PC-9 (cell line): ENCODE measurements at regions of chr20 and their contacts with region 1.

Region 1: DNA sequence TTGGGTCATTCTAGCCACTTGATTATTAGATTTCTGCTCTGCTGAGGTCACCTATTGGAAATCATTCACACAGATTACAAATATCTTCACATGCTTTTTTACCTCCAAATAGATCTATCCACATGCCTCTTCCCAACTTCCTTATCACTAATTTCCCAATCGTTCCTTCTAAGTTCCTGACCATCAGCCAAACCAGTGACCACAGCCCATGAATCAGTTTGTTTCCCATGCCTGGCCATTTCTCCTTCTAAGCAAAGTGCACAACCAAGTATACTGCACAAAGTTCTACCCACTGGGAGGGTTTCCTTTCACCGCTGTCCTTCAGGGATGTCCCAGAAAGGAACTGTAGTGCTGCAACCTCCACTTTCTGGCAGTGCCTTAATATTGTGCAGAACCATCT is 140.5 kb upstream of the SYNDIG1 start:
- DNase-seq: no peak
- H3K4me3 ChIP-seq: no peak overlapping the region
- H3K27ac ChIP-seq: no peak overlapping the region
- H3K4me1 ChIP-seq: no peaks in the 10 kb centered on the region
- H3K27me3 ChIP-seq: no peaks in the 10 kb centered on the region
- CTCF ChIP-seq: no peak

Region 2: GRCh38 chr20:24277196-24277595 is 51.7 kb before region 1 on chr20:
- CTCF ChIA-PET with region 1: no interaction called
- POLR2A ChIA-PET with region 1: no interaction called
- intact Hi-C with region 1: no loop called
- DNase-seq: no peak
- H3K4me3 ChIP-seq: no peak overlapping the region
- H3K27ac ChIP-seq: no peak overlapping the region
- H3K4me1 ChIP-seq: no peaks in the 10 kb centered on the region
- H3K27me3 ChIP-seq: no peaks in the 10 kb centered on the region
- CTCF ChIP-seq: no peak

Region 3: DNA sequence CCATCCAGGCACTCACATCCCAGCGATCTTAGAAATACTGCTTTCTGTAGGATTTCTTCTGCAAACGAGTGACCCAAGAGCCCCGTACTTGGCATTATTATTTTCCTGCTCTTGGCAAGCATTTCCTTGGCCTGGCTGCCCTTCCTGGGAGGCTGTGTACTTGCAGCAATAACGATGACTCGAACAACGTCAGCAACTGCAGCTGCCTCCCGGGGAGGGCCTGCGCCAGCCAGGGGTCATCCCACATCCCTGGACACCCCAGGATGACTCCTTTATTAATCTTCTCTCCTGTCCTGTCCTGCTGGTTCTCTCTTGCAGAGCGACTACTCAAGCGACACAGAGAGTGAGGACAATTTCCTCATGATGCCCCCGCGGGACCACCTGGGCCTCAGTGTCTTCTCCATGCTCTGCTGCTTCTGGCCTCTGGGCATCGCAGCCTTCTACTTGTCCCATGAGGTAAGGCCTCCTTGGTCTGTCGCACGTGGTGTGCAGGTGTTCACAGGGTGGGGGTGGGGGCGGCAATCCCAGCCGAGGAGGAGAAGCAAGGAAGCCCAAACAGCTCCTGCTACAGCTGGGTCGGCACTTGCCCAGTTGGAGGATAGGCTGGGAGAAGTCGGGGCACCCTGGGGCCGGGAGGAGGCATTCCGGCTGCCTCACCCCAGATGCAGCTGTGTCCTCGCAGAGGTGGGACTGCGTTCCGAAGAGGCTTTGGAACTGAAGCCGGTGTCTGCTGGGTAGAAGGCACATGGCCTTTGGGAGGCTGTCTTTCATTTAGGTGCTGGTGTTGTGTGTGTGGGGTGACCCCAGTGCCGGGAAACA is 255.8 kb after region 1 on chr20:
- CTCF ChIA-PET with region 1: no interaction called
- POLR2A ChIA-PET with region 1: no interaction called
- intact Hi-C with region 1: no loop called
- DNase-seq: no peak
- H3K4me3 ChIP-seq: no peak overlapping the region
- H3K27ac ChIP-seq: no peak overlapping the region
- H3K4me1 ChIP-seq: no peaks in the 10 kb centered on the region
- H3K27me3 ChIP-seq: no peaks in the 10 kb centered on the region
- CTCF ChIP-seq: no peak

Region 4: DNA sequence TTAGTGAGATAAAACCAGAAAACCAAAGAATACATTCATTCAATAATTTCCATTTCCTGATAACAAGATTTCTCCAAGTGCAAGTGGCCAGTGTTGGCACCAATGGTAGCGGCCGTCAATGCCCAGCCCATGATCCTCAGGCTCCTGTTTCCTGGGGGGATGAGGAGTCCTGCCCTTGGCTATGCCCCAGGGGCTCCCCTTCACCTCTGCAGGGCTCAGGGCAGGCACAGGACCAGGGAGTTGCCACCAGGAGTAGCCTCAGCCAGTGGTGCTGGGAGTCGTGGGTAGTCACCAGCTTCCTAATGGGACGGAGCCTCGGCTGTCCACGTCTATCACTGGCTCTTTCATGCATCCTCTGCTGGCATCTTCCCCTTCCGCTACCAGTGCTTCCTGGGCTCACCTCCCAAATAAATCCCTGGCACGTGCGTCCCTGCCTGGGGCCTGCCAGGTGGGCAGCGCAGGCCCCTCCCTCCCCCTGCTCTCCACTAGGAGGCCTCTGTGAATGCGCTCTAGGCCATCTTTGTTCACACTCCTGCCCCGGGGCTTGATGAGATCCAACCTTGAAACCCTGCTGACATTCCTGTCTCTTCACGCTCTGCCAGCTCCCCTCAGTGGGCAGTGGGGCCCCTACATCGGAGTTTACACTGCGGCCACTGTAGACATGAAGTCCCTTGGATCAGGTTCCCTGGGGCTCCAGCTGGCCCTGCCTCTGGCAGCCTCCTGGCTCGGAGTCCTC is 356.2 kb after region 1 on chr20:
- CTCF ChIA-PET with region 1: interaction called, 13 read pairs
- POLR2A ChIA-PET with region 1: no interaction called
- intact Hi-C with region 1: no loop called
- DNase-seq: no peak
- H3K4me3 ChIP-seq: no peak overlapping the region
- H3K27ac ChIP-seq: no peak overlapping the region
- H3K4me1 ChIP-seq: no peaks in the 10 kb centered on the region
- H3K27me3 ChIP-seq: peaks cover 3% of the 10 kb centered on the region; the same call in 1 of the 2 replicates
- CTCF ChIP-seq: no peak